ENCODE measurements at regions of chr7 and their contacts with region 1.

Region 1: GRCh38 chr7:151782598-151783448 is 94.1 kb downstream of the PRKAG2 start:
- DNase-seq: peak; percentile 76
- H3K4me3 Mint-ChIP-seq: peak overlapping the region; percentile 68
- H3K27ac Mint-ChIP-seq: peak overlapping the region; percentile 53
- H3K4me1 Mint-ChIP-seq: peaks cover 15% of the 10 kb centered on the region
- H3K27me3 Mint-ChIP-seq: peaks cover 7% of the 10 kb centered on the region

Region 2: GRCh38 chr7:151398446-151399304 is 384.1 kb before region 1 on chr7:
- CTCF ChIA-PET with region 1: no interaction called
- DNase-seq: no peak
- H3K4me3 Mint-ChIP-seq: no peak overlapping the region
- H3K27ac Mint-ChIP-seq: no peak overlapping the region
- H3K4me1 Mint-ChIP-seq: peaks cover 3% of the 10 kb centered on the region
- H3K27me3 Mint-ChIP-seq: peaks cover 16% of the 10 kb centered on the region

Region 3: DNA sequence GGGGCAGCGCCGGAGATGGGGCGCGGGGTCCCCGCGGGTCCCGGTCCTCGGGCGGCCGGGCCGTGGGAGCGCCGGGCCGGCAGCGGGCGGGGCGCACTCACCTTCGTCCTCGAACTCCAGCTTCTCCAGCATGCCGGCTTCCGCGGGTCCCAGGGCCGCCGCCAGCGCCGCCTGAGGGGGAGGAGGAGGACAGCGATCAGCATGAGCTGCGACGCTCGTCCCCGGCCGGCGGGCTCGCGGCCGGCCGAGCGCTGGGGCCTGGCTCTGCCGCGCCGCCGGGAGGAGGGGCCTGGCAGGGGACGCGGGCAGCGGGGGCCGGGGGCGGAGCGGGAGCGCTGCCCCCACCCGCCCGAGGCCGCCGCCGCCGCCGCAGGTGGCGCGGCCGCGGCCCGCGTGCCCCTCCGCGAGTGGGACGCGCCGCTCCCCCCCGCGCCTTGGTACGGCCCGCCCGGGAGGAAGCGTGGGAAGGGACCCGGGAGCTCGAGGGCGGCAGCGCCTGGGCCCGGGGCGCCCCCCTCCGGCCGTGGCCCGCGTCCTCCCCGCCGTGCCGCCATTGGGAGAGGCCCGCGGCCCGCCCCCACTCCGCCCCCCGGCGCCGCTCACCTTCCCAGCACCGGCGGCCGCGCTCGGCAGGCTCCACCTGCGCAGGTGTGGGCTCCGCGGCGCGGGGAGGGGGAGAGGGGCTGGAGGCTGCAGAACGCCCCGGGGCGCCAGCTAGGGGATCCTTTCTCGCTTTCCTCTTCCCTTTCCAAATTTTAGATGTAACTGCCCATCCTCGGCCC is 150.7 kb before region 1 on chr7:
- CTCF ChIA-PET with region 1: interaction called, 15 read pairs
- DNase-seq: peak; percentile 89
- H3K4me3 Mint-ChIP-seq: peak overlapping the region; percentile 88
- H3K27ac Mint-ChIP-seq: peak overlapping the region; percentile 96
- H3K4me1 Mint-ChIP-seq: peaks cover 22% of the 10 kb centered on the region
- H3K27me3 Mint-ChIP-seq: no peaks in the 10 kb centered on the region

Region 4: GRCh38 chr7:151754142-151754590 is 28.7 kb before region 1 on chr7:
- CTCF ChIA-PET with region 1: interaction called, 33 read pairs
- DNase-seq: no peak
- H3K4me3 Mint-ChIP-seq: no peak overlapping the region
- H3K27ac Mint-ChIP-seq: no peak overlapping the region
- H3K4me1 Mint-ChIP-seq: peaks cover 23% of the 10 kb centered on the region
- H3K27me3 Mint-ChIP-seq: peaks cover 4% of the 10 kb centered on the region

Region 5: DNA sequence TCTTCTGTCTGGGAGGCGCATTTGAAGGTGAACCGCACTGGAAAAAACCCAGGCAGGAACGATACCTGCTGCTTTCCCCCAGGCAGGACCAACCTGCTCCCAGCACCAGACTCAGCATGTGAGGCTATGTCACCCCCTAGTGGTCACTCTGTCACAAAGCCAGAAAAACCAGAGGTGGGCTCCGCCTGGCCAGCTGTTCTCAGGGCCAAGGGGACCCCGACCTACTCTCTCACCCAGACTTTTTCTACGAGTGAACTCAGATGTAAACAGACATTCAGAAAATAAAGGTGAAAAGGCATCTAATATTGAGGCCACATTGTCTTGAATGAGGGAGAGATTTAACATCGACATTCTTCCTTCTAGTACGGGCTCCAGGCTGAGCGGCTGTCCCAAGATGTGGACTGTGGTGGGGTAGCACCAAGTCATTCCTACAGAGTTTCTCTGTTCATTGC is 23.2 kb before region 1 on chr7:
- CTCF ChIA-PET with region 1: interaction called, 33 read pairs
- DNase-seq: peak; percentile 73
- H3K4me3 Mint-ChIP-seq: no peak overlapping the region
- H3K27ac Mint-ChIP-seq: no peak overlapping the region
- H3K4me1 Mint-ChIP-seq: peaks cover 25% of the 10 kb centered on the region
- H3K27me3 Mint-ChIP-seq: peaks cover 4% of the 10 kb centered on the region

Region 6: DNA sequence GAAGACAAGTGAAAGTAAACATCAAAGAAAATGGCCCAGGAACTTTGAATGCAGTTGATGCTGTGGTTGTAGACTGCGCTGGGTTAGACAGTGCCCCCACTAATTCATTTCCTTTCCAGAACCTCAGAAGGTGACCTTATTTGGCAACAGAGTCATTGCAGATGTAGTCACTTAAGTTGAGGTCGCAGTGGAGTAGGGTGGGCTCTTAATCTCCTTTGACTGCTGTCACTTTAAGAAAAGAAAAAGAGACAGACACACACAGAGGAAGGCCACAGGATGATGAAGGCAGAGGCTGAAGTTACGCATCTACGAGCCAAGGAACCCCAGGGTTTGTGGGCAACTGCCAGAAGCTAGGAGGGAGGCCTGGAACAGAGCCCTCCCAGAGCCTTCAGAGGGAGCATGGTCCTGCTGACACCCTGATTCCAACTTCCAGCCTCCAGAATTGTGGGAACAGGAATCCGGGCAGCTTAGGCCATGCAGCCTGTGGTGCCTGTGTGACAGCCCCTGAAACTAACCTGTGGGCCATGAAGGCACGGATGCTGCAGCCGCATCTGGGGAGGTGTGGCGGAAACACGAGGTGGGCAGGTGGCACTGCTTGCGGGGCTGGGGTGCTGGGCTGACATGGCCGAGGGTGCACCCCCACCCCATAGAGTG is 13.5 kb before region 1 on chr7:
- CTCF ChIA-PET with region 1: interaction called, 82 read pairs
- DNase-seq: peak; percentile 68
- H3K4me3 Mint-ChIP-seq: peak overlapping the region; percentile 64
- H3K27ac Mint-ChIP-seq: peak overlapping the region; percentile 98
- H3K4me1 Mint-ChIP-seq: peaks cover 62% of the 10 kb centered on the region
- H3K27me3 Mint-ChIP-seq: no peaks in the 10 kb centered on the region

Region 7: DNA sequence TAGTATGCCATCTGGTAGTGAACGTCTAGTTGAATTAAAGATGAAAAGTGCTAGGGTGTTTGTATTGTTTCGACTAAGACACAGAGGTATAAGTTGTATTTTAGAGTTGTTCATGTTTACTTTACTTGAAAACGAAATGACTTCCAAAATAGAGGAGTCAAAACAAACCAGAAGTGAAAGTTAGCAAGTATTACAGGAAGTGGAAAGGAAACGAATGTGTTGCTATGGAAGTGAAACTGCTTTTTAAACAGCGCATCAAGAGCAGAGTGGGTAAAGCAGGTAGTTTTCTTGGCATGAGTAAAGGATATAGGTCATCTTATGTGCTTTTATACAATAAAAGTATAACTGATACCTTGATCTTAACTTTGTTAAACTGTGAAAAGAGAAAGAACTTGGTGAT is 153.4 kb after region 1 on chr7:
- CTCF ChIA-PET with region 1: interaction called, 38 read pairs
- DNase-seq: no peak
- H3K4me3 Mint-ChIP-seq: peak overlapping the region; percentile 56
- H3K27ac Mint-ChIP-seq: peak overlapping the region; percentile 94
- H3K4me1 Mint-ChIP-seq: peaks cover 36% of the 10 kb centered on the region
- H3K27me3 Mint-ChIP-seq: peaks cover 40% of the 10 kb centered on the region